ENCODE measurements at regions of chr3 and their contacts with region 1.

Region 1: DNA sequence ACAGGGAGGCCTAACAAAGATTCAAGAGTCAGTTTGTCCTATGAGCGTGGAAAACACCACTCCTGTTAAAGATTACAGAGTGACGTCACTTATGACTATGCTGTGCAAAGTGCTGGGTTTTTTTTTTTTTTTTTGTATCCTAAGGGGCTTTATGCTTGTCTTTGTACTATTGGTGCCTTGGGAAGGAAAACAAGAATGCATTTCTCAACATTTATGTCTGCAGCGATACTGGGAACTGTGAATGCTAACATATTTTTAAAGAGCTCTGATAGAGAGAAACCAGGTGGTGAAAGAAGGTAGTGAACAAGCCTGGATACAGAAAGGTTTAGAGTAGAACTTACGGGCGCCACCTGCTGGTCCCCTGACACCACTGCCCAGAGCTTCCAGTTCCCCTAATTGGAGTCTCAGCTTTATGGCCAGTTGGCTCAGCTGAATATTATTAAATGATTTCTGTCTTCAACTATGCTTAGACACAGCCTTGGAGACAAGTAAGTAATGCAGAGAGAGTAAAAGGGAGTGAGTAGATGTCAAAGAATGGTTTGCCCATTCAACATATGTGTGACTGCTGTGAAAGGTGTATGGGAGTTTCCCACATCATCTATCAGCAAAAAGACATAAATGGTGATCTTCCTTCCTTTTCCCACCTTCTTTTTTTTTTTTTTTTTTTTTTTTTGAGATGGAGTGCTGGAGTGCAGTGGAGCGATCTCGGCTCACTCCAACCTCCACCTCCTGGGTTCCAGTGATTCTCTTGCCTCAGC is 807.9 kb upstream of the CFAP20DC start:
- DNase-seq: peak; percentile 79 to 91 (median 88)
- ATAC-seq: peak; percentile 93 to 96
- H3K4me3 ChIP-seq: no peak overlapping the region
- H3K27ac ChIP-seq: no peak overlapping the region
- H3K4me1 ChIP-seq: no peaks in the 10 kb centered on the region
- H3K27me3 ChIP-seq: no peaks in the 10 kb centered on the region

Region 2: DNA sequence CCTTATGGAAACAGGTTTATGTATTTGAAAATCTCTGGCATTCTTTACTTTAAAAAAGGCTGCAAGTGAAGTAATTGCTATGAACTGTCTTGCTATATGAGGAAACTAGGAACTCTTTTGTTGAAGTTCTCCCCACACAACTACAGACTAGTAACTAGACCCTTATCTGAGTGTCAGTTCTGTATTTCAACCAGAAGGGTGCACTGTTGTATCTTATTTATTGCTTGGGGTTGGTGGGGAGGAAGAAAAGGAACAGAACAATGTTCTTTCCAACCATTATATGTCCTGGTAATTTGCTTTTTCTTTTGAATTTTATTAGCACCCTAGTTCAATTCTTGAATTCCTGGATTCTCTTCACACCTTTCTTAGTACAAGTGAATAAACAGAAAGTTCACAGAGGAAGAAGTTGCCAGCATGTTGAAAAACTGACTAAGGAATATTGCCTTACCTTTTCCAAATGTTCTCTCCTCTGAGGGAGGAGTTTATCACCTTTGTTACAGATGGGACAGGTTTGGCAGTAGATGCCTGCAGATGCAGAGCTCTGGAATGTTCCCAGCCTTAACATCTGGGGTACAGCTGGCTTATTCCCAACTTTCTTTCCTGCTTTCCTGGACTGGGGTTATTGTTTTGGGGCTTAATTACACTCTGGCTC is 645.5 kb before region 1 on chr3:
- intact Hi-C with region 1: loop called in 3 of 4 experiments (anchors 5 to 10 kb)
- DNase-seq: no peak
- ATAC-seq: peak; percentile 57 to 80
- H3K4me3 ChIP-seq: no peak overlapping the region
- H3K27ac ChIP-seq: no peak overlapping the region
- H3K4me1 ChIP-seq: no peaks in the 10 kb centered on the region
- H3K27me3 ChIP-seq: no peaks in the 10 kb centered on the region

Region 3: GRCh38 chr3:59313365-59313764 is 544.4 kb before region 1 on chr3:
- intact Hi-C with region 1: loop called in 1 of 4 experiments (anchors 10 kb)
- DNase-seq: peak; percentile 57 to 90 (median 85)
- ATAC-seq: peak; percentile 95
- H3K4me3 ChIP-seq: no peak overlapping the region
- H3K27ac ChIP-seq: no peak overlapping the region
- H3K4me1 ChIP-seq: no peaks in the 10 kb centered on the region
- H3K27me3 ChIP-seq: no peaks in the 10 kb centered on the region

Region 4: GRCh38 chr3:59575113-59576001 is 282.4 kb before region 1 on chr3:
- intact Hi-C with region 1: loop called (anchors 5 kb)
- DNase-seq: peak; percentile 80 to 95 (median 91)
- ATAC-seq: peak; percentile 66 to 74
- H3K4me3 ChIP-seq: no peak overlapping the region
- H3K27ac ChIP-seq: no peak overlapping the region
- H3K4me1 ChIP-seq: no peaks in the 10 kb centered on the region
- H3K27me3 ChIP-seq: no peaks in the 10 kb centered on the region

Region 5: GRCh38 chr3:59908280-59908679 is 50.5 kb after region 1 on chr3:
- intact Hi-C with region 1: no loop called
- DNase-seq: no peak
- ATAC-seq: no peak
- H3K4me3 ChIP-seq: no peak overlapping the region
- H3K27ac ChIP-seq: no peak overlapping the region
- H3K4me1 ChIP-seq: no peaks in the 10 kb centered on the region
- H3K27me3 ChIP-seq: no peaks in the 10 kb centered on the region